CD8-positive, alpha-beta T cell (primary cell): ENCODE measurements at regions of chr12 and their contacts with region 1.

Region 1: DNA sequence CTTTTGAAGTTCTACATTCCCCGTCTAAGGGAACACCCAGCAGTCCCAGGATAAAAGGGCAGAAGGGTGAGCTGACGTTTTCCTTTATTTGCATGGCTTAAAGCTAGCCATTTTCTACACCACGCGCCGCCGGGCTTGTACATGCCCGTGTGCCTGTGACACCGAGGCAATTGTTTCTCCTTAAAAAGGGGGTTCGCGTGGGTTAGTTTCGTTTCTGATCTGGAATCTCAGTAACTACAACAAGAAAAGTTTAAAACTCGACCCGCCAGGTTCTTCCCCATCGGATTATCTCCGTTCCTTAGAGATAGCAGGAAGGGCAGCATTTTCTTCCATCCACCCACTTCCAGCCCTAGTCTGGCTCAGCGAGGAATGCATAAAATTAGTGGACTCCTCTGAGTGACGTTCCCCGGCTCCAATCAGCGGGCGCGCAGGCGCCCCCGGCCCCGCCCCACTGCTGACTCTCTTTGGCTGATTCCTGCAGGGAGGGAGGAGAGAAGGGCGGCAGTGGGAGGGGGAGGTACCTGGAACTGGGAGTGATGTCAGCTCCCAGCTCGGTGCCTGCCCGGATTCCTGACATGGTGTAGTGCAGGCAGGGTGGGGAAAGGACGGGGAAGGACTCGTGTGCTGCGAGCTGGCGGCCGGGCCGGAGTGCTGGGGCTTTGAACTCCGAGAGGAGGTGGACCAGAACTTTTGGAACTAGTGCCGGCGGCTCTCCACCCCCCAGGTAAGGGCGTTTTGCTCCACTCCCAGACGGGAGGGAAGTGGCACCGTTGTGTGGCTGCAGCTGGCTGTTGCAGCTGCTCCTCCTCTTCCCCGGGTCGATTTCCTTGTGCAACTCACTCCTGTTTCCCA is at the start of gene PPFIBP1:
- DNase-seq: peak; percentile 93 to 100 (median 98)
- ATAC-seq: peak; percentile 96
- H3K4me3 ChIP-seq: peak within 1 kb of the TSS; percentile 89 to 91
- H3K4me3 Mint-ChIP-seq: peak within 1 kb of the TSS; percentile 98
- H3K27ac ChIP-seq: peak within 1 kb of the TSS; percentile 76 to 80
- H3K27ac Mint-ChIP-seq: peak within 1 kb of the TSS; percentile 96
- H3K4me1 ChIP-seq: peaks cover 14% of the 10 kb centered on the region
- H3K4me1 Mint-ChIP-seq: peaks cover 24% of the 10 kb centered on the region
- H3K27me3 ChIP-seq: no peaks in the 10 kb centered on the region
- H3K27me3 Mint-ChIP-seq: peaks cover 8% of the 10 kb centered on the region
- CTCF ChIP-seq: no peak
- total RNA-seq, gene PPFIBP1: 1.1 to 1.9 TPM

Region 2: DNA sequence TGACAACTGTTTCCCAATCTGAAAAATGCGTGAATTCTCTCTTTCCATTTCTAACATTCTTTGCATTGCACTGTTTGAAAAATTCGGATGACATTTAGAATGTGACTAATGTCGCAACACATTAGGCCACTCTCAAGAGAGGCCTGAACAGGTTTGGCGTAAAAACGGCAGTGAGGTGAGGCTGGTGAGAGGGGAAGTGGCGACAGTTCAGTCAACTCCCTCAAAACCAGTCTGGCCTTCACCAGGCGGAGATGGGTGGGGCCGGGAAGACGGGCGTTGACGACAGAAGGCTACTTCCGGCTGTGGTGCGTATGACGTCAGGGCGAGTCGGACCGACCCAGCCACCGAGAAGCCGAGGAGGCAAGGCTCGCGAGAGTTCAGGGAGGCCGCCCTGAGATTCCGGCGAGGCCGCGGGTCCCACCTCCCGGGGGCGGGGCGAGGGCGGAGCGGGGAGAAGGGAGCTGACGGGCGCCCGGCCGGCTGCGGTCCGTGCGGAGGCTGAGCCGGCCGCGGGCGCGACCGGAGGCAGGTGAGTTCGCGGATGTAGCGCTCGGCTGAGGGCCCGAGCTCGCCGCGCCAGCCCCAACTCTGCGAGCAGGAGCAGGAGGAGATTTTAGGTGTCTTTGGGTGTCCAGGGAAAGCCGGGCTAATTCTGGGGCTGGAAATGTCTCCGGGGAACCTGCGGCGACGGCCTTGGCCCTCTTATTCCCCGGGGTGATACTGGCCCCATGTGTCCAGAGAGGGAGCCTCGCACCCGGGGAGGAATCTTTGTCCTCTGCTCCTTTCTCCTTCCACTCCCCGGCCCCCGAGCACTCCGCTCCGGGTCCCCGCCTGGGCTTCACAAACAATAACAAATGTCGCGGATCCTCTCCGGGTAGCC is 279.8 kb before region 1 on chr12 and contains the start of gene STK38L:
- CTCF ChIA-PET with region 1: no interaction called
- POLR2A ChIA-PET with region 1: no interaction called
- intact Hi-C with region 1: loop called (anchors 5 to 10 kb)
- DNase-seq: peak; percentile 90 to 99 (median 98)
- ATAC-seq: peak; percentile 95
- H3K4me3 ChIP-seq: peak within 1 kb of the TSS; percentile 84 to 89
- H3K4me3 Mint-ChIP-seq: peak within 1 kb of the TSS; percentile 96
- H3K27ac ChIP-seq: peak within 1 kb of the TSS; percentile 76
- H3K27ac Mint-ChIP-seq: peak within 1 kb of the TSS; percentile 96
- H3K4me1 ChIP-seq: peaks cover 14% of the 10 kb centered on the region
- H3K4me1 Mint-ChIP-seq: peaks cover 52% of the 10 kb centered on the region
- H3K27me3 ChIP-seq: no peaks in the 10 kb centered on the region
- H3K27me3 Mint-ChIP-seq: no peaks in the 10 kb centered on the region
- CTCF ChIP-seq: no peak
- total RNA-seq, gene STK38L: 27.0 to 28.6 TPM

Region 3: GRCh38 chr12:27534060-27534764 is 10.3 kb after region 1 on chr12:
- CTCF ChIA-PET with region 1: interaction called, 4 read pairs
- POLR2A ChIA-PET with region 1: interaction called, 6 read pairs
- intact Hi-C with region 1: loop called in 1 of 2 experiments (anchors 1 kb)
- DNase-seq: peak in 4 of 9 experiments; percentile 11 to 77 (median 52)
- ATAC-seq: peak; percentile 86
- H3K4me3 ChIP-seq: no peak overlapping the region
- H3K4me3 Mint-ChIP-seq: peak overlapping the region; percentile 15
- H3K27ac ChIP-seq: no peak overlapping the region
- H3K27ac Mint-ChIP-seq: peak overlapping the region; percentile 8
- H3K4me1 ChIP-seq: peaks cover 21% of the 10 kb centered on the region
- H3K4me1 Mint-ChIP-seq: peaks cover 26% of the 10 kb centered on the region
- H3K27me3 ChIP-seq: no peaks in the 10 kb centered on the region
- H3K27me3 Mint-ChIP-seq: no peaks in the 10 kb centered on the region
- CTCF ChIP-seq: no peak

Region 4: DNA sequence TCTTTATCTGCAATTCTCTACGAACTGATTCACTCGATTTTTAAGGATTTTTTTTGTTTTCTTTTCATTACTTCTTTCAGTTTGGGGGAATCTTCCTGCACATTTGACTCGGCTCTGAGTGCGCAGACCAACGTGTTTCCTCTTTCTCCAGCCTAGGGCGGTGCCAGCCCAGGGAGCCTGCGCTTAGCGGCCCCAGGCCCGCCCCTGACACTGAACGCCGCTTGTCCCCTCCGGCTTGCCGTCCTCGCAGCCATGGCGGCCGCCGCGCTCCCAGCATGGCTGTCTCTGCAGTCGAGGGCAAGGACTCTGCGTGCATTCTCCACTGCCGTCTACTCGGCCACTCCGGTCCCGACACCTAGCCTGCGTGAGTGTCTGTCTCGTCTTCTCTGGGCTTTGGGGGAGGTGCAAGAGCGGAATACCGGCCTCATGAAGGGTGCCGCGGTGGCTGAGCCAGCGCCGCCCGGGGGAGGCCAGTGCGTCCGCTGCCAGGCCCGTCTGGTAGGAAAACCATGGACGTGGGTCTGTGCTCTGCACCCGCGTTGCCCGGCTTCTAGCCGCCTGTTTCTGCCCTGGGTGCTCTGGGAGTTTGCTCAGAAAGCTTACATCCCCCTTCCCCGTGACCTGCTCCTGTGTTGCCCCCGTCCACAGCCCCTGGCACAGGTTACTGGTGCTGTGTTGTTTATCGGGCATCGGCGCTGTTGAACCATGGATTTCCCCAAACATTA is 186.9 kb after region 1 on chr12 and contains the start of gene MRPS35:
- CTCF ChIA-PET with region 1: no interaction called
- POLR2A ChIA-PET with region 1: no interaction called
- intact Hi-C with region 1: loop called (anchors 2 to 5 kb)
- DNase-seq: peak; percentile 83 to 95 (median 90)
- ATAC-seq: peak; percentile 96
- H3K4me3 ChIP-seq: peak within 1 kb of the TSS; percentile 86 to 89
- H3K4me3 Mint-ChIP-seq: peak within 1 kb of the TSS; percentile 96
- H3K27ac ChIP-seq: peak within 1 kb of the TSS; percentile 68 to 71
- H3K27ac Mint-ChIP-seq: peak within 1 kb of the TSS; percentile 95
- H3K4me1 ChIP-seq: peaks cover 11% of the 10 kb centered on the region
- H3K4me1 Mint-ChIP-seq: peaks cover 36% of the 10 kb centered on the region
- H3K27me3 ChIP-seq: no peaks in the 10 kb centered on the region
- H3K27me3 Mint-ChIP-seq: peaks cover 6% of the 10 kb centered on the region
- CTCF ChIP-seq: no peak
- total RNA-seq, gene MRPS35: 30.0 to 30.8 TPM

Region 5: DNA sequence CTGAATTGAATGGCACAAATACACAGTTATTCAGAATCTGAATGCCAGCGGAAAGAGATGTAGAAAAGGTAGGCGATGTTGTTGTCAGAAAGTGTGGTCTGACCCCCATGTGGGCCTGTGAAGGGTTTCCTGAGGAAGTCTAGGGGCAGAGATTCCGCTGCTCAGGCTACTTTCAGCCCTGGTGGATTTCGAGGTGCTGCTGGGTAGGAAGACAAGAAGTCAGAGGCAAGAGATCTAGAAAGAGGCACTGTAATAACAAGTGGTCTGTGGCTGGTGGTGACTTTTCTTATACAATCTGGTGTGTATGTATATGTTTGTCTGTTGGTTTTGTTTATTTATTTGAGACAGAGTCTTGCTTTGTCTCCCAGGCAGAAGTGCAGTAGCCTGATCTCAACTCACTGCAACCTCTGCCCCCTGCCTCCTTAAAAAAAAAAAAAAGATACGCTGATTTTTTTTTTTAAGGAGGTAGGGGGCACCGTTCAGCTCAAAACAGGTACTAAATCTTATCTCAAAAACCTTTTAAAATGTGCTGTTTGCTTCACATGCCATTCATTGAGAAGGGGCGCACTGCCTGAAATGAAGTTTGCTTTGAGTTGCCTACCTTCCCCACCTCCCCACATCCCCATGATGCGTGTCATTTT is 283.3 kb after region 1 on chr12:
- CTCF ChIA-PET with region 1: no interaction called
- POLR2A ChIA-PET with region 1: no interaction called
- intact Hi-C with region 1: loop called in 1 of 2 experiments (anchors 10 kb)
- DNase-seq: peak in 8 of 9 experiments; percentile 3 to 58 (median 18)
- ATAC-seq: peak; percentile 74
- H3K4me3 ChIP-seq: peak overlapping the region in 1 of 2 experiments; percentile 5
- H3K4me3 Mint-ChIP-seq: peak overlapping the region; percentile 72
- H3K27ac ChIP-seq: peak overlapping the region in 1 of 2 experiments; percentile 9
- H3K27ac Mint-ChIP-seq: peak overlapping the region; percentile 91
- H3K4me1 ChIP-seq: peaks cover 7% of the 10 kb centered on the region
- H3K4me1 Mint-ChIP-seq: peaks cover 38% of the 10 kb centered on the region
- H3K27me3 ChIP-seq: no peaks in the 10 kb centered on the region
- H3K27me3 Mint-ChIP-seq: peaks cover 4% of the 10 kb centered on the region
- CTCF ChIP-seq: no peak

Region 6: DNA sequence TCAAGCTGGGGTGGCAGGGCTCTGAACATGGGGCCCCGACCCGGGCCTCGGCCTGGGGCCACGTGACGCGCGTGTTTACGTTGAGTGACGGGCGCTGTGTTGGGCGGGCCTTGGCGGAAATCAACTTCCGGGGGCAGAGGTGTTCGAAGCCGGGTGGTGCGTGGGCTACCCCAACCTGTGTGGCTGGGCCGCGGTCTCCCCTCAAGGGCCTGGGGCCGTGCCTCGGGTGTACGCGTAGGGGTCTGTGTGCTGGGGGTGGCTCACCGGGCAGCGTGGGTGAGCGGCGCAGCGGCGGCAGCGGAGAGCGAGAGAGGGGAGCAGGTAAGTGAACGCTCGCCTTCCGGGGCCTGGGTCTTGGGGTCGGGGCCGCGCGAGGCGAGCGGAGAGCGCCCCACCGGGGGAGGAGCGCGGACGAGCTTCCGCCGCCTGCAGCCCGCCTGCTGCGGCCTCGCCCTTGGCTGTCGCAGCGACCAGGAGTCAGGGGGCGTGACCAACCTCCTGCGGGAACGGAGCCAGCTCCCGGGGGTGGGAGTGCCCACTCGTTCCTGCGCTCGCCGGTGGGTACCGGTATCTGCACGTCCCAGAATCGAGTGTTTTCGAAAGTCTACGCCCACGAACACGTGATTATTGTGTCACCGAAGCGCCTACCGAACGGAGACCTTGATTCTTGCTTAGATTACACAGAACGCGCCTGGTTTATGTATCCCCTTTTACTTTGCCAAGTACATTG is 666.6 kb after region 1 on chr12 and contains the start of gene CCDC91:
- CTCF ChIA-PET with region 1: no interaction called
- POLR2A ChIA-PET with region 1: no interaction called
- intact Hi-C with region 1: loop called in 1 of 2 experiments (anchors 10 kb)
- DNase-seq: peak; percentile 80 to 96 (median 89)
- ATAC-seq: peak; percentile 77
- H3K4me3 ChIP-seq: peak within 1 kb of the TSS; percentile 58 to 90
- H3K4me3 Mint-ChIP-seq: peak within 1 kb of the TSS; percentile 97
- H3K27ac ChIP-seq: peak within 1 kb of the TSS; percentile 91 to 100
- H3K27ac Mint-ChIP-seq: peak within 1 kb of the TSS; percentile 99
- H3K4me1 ChIP-seq: peaks cover 27% of the 10 kb centered on the region
- H3K4me1 Mint-ChIP-seq: peaks cover 67% of the 10 kb centered on the region
- H3K27me3 ChIP-seq: no peaks in the 10 kb centered on the region
- H3K27me3 Mint-ChIP-seq: no peaks in the 10 kb centered on the region
- CTCF ChIP-seq: no peak
- total RNA-seq, gene CCDC91: 54.3 to 63.1 TPM